ENCODE measurements at regions of chr6 and their contacts with region 1.

Region 1: DNA sequence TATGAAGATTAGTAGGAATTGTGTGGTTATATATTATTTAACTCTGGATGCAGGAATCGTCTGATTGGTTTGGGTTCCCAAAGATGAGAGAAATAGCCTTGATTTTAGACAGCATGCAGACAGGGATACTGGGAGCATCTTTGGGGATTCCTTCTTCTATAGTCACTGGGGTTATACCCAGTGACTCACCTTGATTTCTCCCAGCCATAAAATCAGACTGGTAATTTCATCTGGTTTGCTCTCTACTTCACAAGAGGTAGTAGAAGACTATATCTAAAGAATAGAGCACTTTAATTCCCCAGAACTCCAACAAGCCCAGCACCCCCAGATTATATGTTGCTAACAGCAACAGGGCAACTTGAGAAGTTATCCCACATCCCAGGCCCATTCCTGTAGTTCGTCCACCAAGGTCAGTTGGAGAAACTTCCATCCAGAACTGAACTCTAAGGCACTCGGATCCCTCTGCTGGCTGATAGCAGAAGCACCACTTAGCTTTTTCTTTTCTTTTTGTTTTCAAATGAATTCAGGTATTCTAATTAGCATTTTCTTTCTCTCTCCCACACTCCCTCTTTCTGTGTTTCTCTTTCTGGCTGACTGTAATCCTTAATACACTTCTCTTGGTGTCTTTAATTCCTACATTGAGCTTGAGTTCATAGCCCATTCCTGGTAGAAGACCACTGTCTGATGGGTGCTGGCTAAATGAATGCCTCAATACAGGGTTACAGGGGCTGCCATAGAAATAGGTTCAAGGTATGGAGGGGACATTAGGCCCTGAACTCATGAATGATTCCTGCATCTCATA is 20.4 kb upstream of the EFHC1 start:
- DNase-seq: no peak
- H3K4me3 ChIP-seq: no peak overlapping the region
- CTCF ChIP-seq: peak in 1 of 3 donors; percentile 54
- POLR2A ChIP-seq: no peak

Region 2: GRCh38 chr6:52284460-52285176 is 115.1 kb before region 1 on chr6 and contains the start of gene MCM3:
- intact Hi-C with region 1: loop called (anchors 10 kb)
- DNase-seq: peak; percentile 98 to 99
- H3K4me3 ChIP-seq: peak within 1 kb of the TSS; percentile 81
- CTCF ChIP-seq: no peak
- POLR2A ChIP-seq: no peak
- total RNA-seq, gene MCM3: 17.8 to 33.6 (median 25.3) TPM